A549 (cell line): ENCODE measurements at regions of chr11 and their contacts with region 1.

Region 1: DNA sequence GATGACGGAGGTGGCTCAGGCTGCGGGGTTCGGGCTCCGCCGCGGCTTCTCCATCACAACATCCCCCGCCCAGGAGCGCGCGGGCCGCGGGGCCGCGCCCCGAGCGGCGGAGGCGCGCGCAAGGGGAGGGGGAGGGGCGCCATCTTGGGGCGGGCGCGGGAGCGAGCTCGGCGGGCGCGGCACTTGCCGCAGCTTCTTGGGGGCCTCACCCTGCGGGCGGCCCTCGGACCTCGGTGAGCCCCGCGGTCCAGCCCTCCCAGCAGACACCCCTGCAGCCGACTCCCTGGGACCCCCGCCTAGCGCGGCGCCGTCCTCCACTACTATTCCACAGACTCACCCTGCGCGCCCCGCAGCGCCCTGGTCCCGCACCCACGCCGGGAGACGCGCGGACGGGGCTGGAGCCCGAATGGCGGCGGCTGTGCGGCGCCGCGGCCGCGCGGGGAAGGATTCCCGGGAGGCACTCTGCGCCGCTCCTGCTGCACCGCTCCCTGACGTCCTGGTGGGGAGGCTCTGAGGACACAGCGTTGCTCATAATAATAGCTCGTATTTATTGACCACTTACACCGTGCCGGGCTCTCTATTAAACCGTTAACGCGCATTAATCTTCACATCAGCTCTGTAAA is at the start of gene APBB1:
- DNase-seq: peak; percentile 44 to 62
- ATAC-seq: peak; percentile 85 to 89
- H3K4me3 ChIP-seq: peak within 1 kb of the TSS; percentile 74
- H3K27ac ChIP-seq: peak within 1 kb of the TSS; percentile 85 to 95
- H3K4me1 ChIP-seq: peaks cover 6% of the 10 kb centered on the region
- CTCF ChIP-seq: no peak
- EP300 ChIP-seq: no peak
- POLR2A ChIP-seq: peak; percentile 60
- RAD21 ChIP-seq: peak in 1 of 2 experiments; percentile 21; a peak in 1 of 5 replicates
- polyA plus RNA-seq, gene APBB1: 13.6 and 17.2 TPM in 2 replicates

Region 2: GRCh38 chr11:6345366-6345765 is 73.8 kb before region 1 on chr11:
- CTCF ChIA-PET with region 1: no interaction called
- POLR2A ChIA-PET with region 1: no interaction called
- DNase-seq: no peak
- ATAC-seq: no peak
- H3K4me3 ChIP-seq: no peak overlapping the region
- H3K27ac ChIP-seq: no peak overlapping the region
- H3K4me1 ChIP-seq: no peaks in the 10 kb centered on the region
- CTCF ChIP-seq: no peak
- EP300 ChIP-seq: no peak
- POLR2A ChIP-seq: no peak
- RAD21 ChIP-seq: no peak

Region 3: DNA sequence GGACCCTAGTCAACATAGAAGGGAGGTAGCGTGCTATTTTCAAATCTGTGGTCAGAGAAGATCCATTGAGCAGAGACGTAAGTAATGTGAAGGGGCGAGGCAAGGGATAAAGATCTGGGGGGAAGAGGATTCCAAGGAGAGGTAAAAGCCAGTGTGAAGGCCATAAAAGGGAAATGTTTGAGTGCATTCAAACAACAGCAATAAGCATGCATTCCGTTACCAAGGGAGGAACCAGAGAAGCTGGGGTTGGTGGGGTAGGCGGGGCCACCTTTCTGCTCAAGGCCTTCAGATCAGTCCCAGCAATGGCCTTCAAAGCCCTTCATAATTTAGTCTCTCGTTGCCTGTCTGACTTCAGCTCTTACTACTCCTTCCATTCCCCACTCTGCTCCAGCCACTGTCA is 47.3 kb before region 1 on chr11:
- CTCF ChIA-PET with region 1: no interaction called
- POLR2A ChIA-PET with region 1: no interaction called
- DNase-seq: no peak
- ATAC-seq: peak in 1 of 2 experiments; percentile 19; a peak in 1 of 6 replicates
- H3K4me3 ChIP-seq: no peak overlapping the region
- H3K27ac ChIP-seq: no peak overlapping the region
- H3K4me1 ChIP-seq: no peaks in the 10 kb centered on the region
- CTCF ChIP-seq: no peak
- EP300 ChIP-seq: no peak
- POLR2A ChIP-seq: no peak
- RAD21 ChIP-seq: no peak

Region 4: GRCh38 chr11:6389921-6390724 is 29.0 kb before region 1 on chr11 and contains the start of gene SMPD1:
- CTCF ChIA-PET with region 1: no interaction called
- POLR2A ChIA-PET with region 1: interaction called, 26 read pairs
- DNase-seq: peak; percentile 82
- ATAC-seq: peak; percentile 90 to 94
- H3K4me3 ChIP-seq: peak within 1 kb of the TSS; percentile 51
- H3K27ac ChIP-seq: peak within 1 kb of the TSS; percentile 77 to 87
- H3K4me1 ChIP-seq: peaks cover 32% of the 10 kb centered on the region
- CTCF ChIP-seq: no peak
- EP300 ChIP-seq: no peak
- POLR2A ChIP-seq: 0 out of 2 replicates have a peak, but pooled peaks have one; percentile 31
- RAD21 ChIP-seq: no peak
- polyA plus RNA-seq, gene SMPD1: 5.1 and 5.5 TPM in 2 replicates

Region 5: DNA sequence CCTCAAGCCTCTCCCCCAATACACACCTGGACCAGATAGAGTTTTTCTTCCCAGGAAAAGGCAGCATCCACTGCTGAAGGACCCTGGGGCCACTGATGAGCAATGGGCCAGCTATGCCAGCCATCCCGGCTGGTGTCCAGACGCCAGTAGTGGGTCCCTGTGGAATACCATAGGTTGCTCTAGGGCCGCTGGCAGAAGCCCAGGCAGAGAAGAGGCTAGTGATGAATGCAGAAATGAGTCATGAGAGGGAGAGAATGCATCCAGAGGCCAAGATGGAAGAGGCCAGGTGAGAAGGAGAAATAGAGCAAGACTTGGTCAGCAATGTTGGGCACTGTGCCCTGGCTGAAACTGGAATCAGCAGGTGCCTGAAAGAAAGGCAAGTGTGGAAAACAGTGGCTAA is 12.7 kb after region 1 on chr11:
- CTCF ChIA-PET with region 1: interaction called, 5 read pairs
- POLR2A ChIA-PET with region 1: interaction called, 11 read pairs
- DNase-seq: peak; percentile 48
- ATAC-seq: peak; percentile 79 to 87
- H3K4me3 ChIP-seq: no peak overlapping the region
- H3K27ac ChIP-seq: peak overlapping the region in 1 of 2 experiments; percentile 9; a peak in 2 of 6 replicates
- H3K4me1 ChIP-seq: peaks cover 18% of the 10 kb centered on the region
- CTCF ChIP-seq: no peak
- EP300 ChIP-seq: no peak
- POLR2A ChIP-seq: no peak
- RAD21 ChIP-seq: no peak

Region 6: DNA sequence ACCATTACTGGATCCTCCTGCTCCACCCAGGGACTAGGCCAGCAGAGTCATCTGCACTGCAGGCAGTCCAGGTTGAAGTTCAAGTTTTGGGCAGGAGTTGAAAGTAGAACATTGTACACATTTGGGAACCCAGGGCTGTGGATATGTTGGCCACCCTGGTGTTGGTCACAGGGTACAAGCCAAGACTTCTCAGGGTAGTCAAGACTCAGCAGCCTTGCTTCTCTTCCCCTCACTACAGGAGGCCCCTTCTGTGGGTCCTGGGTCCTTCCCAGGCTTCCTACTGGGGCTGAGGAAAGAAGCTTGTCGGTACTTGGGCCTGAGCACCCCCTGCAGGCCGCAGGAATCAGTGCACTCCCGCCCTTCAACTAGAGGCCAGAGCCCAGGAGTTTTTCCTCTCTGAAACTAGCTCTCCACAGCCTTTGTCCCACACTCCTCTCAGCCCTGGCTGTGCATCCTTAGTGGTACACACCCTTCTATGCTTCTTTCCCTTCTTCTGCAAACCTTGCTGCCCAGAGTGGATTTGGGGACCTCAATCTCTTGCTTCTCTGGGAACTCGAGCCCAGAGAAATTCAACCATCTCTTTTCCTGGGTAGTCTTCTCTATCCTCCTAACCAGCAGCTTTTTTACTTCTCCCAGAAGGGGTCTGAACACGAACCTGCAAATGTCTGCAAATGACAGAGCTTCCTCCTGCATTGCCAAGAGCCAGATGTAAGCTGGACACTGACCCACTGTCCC is 24.3 kb after region 1 on chr11:
- CTCF ChIA-PET with region 1: interaction called, 26 read pairs
- POLR2A ChIA-PET with region 1: interaction called, 9 read pairs
- DNase-seq: peak; percentile 36 to 57
- ATAC-seq: peak; percentile 56 to 83; a peak in 5 of 6 replicates
- H3K4me3 ChIP-seq: no peak overlapping the region
- H3K27ac ChIP-seq: no peak overlapping the region
- H3K4me1 ChIP-seq: peaks cover 13% of the 10 kb centered on the region
- CTCF ChIP-seq: peak; percentile 64
- EP300 ChIP-seq: no peak
- POLR2A ChIP-seq: no peak
- RAD21 ChIP-seq: peak; percentile 73 to 75

Region 7: GRCh38 chr11:6481012-6481923 is 62.1 kb after region 1 on chr11 and contains the starts of genes ARFIP2 and TIMM10B:
- CTCF ChIA-PET with region 1: no interaction called
- POLR2A ChIA-PET with region 1: interaction called, 18 read pairs
- DNase-seq: peak; percentile 97 to 99
- ATAC-seq: peak; percentile 97 to 99
- H3K4me3 ChIP-seq: peak within 1 kb of the TSS; percentile 90
- H3K27ac ChIP-seq: peak within 1 kb of the TSS; percentile 86 to 94
- H3K4me1 ChIP-seq: peaks cover 25% of the 10 kb centered on the region
- CTCF ChIP-seq: no peak
- EP300 ChIP-seq: no peak
- POLR2A ChIP-seq: peak; percentile 86
- RAD21 ChIP-seq: no peak
- polyA plus RNA-seq, gene ARFIP2: 87.9 and 88.5 TPM in 2 replicates
- polyA plus RNA-seq, gene TIMM10B: 31.6 and 35.6 TPM in 2 replicates

Region 8: GRCh38 chr11:6667733-6668374 is 248.7 kb after region 1 on chr11:
- CTCF ChIA-PET with region 1: no interaction called
- POLR2A ChIA-PET with region 1: no interaction called
- DNase-seq: peak in 1 of 2 experiments; percentile 21
- ATAC-seq: peak; percentile 62 to 79; a peak in 5 of 6 replicates
- H3K4me3 ChIP-seq: no peak overlapping the region
- H3K27ac ChIP-seq: no peak overlapping the region
- H3K4me1 ChIP-seq: no peaks in the 10 kb centered on the region; the same call in 2 of the 3 replicates
- CTCF ChIP-seq: peak; percentile 21; the same call in 2 of the 3 replicates
- EP300 ChIP-seq: no peak
- POLR2A ChIP-seq: no peak
- RAD21 ChIP-seq: 0 out of 5 replicates have a peak, but pooled peaks of 1 of the 2 experiments have one; percentile 25